Right ventricle myocardium inferior (tissue), 1 donor: ENCODE measurements at regions of chr4 and their contacts with region 1.

Region 1: DNA sequence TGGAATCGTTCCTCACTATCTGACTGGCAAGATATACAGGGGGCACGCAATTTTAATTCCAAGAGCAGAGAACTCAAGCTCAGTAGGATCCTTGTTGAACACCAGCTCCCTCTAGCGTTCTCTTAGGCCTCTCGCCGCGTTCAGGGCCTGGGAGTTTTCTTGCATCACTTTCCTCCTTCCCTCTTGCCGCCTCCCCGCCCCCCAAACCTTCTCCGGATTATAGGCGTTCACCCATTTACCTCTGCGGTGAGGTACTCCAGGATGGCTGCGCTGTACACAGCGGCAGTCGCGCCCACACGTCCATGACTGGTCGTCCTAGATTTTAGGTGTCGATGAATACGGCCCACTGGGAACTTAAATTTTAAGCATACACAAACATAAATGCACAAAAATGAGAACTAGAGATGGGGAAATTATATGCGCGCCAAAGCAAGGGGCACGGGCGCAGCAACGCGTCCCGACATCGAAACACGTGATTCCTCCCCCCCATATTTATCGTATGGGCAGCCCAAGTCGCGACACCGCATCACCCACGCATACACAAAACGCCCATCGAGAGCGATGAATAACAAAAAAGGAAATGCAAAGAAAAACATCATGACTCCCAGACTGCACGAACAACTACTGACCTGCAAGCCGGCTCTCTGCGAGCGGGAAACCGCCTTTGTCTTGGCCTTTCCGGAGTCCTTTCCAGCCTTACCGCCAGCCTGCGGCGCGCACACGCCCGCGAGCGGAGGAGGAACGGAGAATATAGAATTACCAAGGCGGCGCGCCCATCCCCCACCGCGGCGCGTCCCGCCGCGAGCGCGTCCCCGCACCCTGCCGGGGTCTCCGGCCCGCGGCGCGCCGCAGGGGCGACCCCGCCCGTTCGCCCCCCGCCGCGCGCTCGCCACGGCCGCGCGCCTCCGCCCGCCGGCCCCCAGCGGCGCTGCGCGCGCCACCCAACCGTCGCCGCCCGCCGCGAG is 759 bp downstream of the H2AZ1 start:
- DNase-seq: peak; percentile 95
- ATAC-seq: peak; percentile 37

Region 2: DNA sequence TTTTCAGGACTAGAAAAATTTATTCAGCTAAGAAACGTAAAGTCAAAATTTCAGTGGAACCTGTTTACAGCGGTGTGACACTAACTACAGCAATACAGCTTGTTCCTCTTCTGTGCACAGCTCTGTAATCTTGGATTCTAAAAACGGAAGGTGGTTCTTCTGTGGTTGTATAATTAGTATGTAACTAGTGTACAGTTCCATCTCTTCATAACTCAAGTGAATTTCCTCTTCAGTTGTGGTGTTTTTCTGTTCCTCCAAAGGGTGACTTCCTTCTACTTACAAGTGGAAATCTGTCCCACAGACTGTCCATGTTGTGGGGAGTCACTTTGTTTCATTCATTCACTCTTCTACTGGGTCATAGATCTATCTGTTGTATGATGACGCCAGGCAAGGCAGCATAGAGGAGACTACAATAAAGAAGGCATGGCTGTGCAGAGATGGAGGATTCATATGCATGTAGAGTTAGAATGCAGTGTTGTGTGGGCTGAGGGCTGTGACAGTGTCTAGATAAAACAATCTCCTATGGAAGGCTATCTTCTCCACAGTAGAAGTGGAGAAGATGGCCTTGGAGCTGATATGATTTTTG is 127.3 kb before region 1 on chr4:
- intact Hi-C with region 1: loop called (anchors 5 kb)
- DNase-seq: no peak
- ATAC-seq: peak; percentile 87

Region 3: DNA sequence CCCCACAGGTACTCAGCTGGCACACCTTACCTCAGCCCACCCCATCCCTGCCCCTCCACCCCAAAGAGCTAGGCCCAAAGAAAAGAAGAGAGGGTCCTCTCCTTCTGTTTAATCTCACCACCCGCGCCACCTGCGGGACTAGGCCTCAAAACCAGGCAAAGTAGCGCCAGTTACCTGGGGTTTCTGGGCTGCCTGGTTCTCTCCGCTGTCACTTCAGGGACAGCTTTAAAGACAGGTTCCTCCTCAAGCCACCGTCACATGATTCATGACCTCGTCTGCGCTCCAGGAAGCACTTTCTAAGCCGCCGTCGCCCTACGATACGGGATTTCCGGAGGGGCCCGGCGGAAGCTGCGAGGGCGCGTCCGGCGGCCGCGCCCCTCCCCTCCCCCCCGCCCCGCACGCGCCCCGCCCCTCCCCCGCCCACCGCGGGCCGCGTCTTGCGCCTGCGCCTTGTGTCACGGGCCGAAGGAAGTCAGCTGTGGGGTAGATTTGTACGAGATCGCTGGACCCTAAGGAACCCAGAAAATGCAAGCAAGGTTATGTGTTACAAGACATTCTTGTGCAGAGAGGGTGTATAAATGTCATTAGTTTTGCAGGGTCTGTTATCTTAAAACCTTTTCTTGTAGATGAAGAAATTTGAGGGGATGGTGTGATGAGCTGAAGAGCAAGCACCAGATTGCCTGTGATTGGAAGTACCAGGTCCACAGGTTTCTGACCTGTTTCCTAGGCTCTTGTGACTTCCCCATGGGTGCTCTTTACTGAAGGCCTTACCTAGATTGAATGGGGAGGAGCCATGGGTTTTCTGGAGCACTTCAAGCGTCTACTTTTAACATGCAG is 54.9 kb before region 1 on chr4 and contains the start of gene LAMTOR3:
- intact Hi-C with region 1: loop called (anchors 1 kb)
- DNase-seq: peak; percentile 93
- ATAC-seq: peak; percentile 99
- total RNA-seq, gene LAMTOR3: 36.3 TPM